Activated T-helper 2 cell treated with anti-CD3 and anti-CD28 coated beads, Interferon-gamma antibody, Interleukin-2, Interleukin-4, amounts not matched to agents 10 μg/mL and 5 μg/mL and 100 μg/mL, durations not matched to agents 14 hours and 24 hours and 36 hours (primary cell): ENCODE measurements at regions of chr5 and their contacts with region 1.

Region 1: GRCh38 chr5:97004423-97005060 is 68.7 kb downstream of the LNPEP start:
- DNase-seq: no peak
- H3K4me3 Mint-ChIP-seq: peak overlapping the region; percentile 18
- H3K27ac Mint-ChIP-seq: peak overlapping the region; percentile 73
- H3K4me1 Mint-ChIP-seq: peaks cover 29% of the 10 kb centered on the region
- H3K27me3 Mint-ChIP-seq: no peaks in the 10 kb centered on the region

Region 2: DNA sequence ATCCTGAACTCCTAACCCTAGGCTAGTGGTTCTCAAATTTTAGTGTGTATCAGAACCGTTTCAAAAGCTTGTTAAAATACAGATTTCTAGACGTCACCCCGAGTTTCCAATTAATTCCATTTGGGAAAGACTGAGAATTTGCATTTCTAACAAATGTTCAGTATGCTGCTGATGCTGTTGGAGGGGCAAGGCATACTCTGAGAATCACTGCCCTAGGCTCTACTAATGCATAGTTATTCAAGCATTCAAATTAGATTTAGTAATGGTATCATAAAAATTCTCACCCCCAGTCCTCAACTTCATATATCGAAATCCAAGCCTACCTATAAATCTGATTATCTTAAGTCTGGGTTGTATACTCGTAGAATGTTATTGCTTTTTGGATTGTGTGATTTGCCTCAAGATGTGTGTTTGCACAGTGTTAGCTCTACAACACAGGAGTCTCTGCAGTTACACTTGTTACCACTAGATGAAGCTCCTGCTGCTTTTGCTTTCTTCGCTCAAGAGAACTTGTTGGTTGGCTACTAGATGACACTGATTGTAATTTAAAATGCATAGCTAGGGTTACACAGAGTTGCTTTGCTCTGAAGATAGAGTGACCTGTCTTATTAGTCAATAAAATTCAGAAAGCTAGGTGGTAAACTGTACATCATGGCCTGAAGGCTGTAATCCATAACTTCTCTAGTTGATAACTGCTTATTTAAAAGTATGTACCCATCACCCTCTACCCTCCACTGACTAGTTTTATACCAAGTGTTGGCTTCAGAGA is 135.8 kb before region 1 on chr5:
- intact Hi-C with region 1: loop called (anchors 5 kb)
- DNase-seq: no peak
- H3K4me3 Mint-ChIP-seq: no peak overlapping the region
- H3K27ac Mint-ChIP-seq: no peak overlapping the region
- H3K4me1 Mint-ChIP-seq: peaks cover 54% of the 10 kb centered on the region
- H3K27me3 Mint-ChIP-seq: no peaks in the 10 kb centered on the region

Region 3: DNA sequence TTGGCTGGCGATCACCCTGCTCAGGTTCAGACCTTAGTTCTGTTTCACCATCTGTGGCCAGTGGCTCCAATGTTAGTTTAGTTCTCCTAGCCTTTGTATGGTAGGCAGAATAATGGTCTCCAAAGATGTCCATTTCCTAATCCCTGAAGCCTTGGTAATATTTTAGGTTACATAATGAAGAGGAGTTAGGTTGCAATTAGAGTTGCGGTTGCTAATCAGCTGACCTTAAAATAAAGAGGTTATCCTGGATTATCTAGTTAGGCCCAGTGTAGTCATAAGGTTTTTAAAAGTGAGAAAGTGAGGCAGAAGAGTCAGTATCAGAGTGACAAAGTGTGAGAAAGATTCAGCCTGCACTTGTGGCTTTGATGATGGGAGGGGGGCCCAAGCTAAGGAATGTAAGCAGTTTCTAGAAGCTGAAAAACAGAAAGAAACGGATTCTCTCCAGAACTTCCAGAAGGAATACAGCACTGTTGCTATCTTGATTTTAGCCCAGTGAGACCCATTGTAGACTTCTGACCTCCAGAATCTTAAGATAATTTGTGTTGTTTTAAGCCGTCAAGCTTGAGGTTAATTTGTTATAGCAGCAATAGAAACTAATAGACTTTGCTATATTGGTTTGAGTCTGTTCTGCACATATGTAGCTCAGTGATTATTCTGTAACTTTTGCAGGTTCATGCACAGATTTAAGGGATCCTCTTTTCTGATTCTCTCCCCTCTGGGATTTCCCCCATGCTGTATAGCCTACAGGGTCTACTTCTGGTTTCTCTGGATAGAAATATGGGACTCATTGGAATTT is 47.1 kb before region 1 on chr5:
- intact Hi-C with region 1: loop called (anchors 2 kb)
- DNase-seq: no peak
- H3K4me3 Mint-ChIP-seq: peak overlapping the region; percentile 31
- H3K27ac Mint-ChIP-seq: peak overlapping the region; percentile 82
- H3K4me1 Mint-ChIP-seq: peaks cover 63% of the 10 kb centered on the region
- H3K27me3 Mint-ChIP-seq: no peaks in the 10 kb centered on the region

Region 4: DNA sequence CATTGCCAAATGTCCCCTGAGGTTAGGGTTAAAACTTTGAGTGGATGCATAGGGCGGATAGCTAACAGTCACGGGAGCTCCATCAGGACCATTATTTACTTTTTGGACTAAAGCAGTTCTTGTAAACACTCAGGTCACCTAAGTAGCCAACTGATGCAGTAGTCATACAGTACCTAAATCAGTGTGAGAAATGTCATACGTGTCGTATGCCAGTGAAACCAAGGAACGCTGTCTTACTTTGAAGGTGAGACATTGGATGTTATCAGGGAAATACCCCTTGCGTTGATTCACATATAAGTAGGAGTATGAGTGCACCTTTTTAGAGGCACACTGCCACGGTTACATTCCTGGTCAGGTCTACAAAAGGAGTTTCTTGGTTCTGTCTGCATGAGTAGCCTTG is 33.3 kb after region 1 on chr5:
- intact Hi-C with region 1: loop called (anchors 5 kb)
- DNase-seq: no peak
- H3K4me3 Mint-ChIP-seq: no peak overlapping the region
- H3K27ac Mint-ChIP-seq: no peak overlapping the region
- H3K4me1 Mint-ChIP-seq: no peaks in the 10 kb centered on the region
- H3K27me3 Mint-ChIP-seq: no peaks in the 10 kb centered on the region

Region 5: DNA sequence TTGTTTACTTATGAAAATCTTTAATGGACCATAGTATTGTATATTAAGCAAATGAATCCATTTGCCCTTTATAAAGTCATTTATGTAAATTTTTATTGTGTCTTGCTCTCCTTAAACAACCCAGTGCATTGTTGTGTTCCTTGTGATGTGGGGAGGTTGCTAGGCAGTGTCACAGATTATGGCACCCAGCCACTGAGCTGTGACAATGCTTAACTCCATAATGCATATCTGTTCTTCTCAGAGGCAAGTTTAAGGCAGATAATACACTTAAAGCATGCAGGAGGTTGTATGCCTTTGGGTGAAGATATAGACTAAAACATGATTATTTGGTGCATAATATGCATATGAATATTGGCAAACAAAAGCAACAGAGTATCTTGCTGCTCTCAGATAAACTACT is 448.1 kb after region 1 on chr5:
- intact Hi-C with region 1: no loop called
- DNase-seq: no peak
- H3K4me3 Mint-ChIP-seq: no peak overlapping the region
- H3K27ac Mint-ChIP-seq: no peak overlapping the region
- H3K4me1 Mint-ChIP-seq: no peaks in the 10 kb centered on the region
- H3K27me3 Mint-ChIP-seq: no peaks in the 10 kb centered on the region